Activated CD8-positive, alpha-beta T cell treated with anti-CD3 and anti-CD28 coated beads for 36 hours (primary cell): ENCODE measurements at regions of chr10 and their contacts with region 1.

Region 1: GRCh38 chr10:124719213-124719851 is 24.8 kb downstream of the FAM53B start:
- DNase-seq: peak; percentile 85
- ATAC-seq: peak; percentile 45
- H3K4me3 Mint-ChIP-seq: peak overlapping the region; percentile 52
- H3K27ac Mint-ChIP-seq: peak overlapping the region; percentile 91
- H3K4me1 Mint-ChIP-seq: peaks cover 88% of the 10 kb centered on the region
- H3K27me3 Mint-ChIP-seq: no peaks in the 10 kb centered on the region
- CTCF ChIP-seq: peak; percentile 60

Region 2: GRCh38 chr10:124671486-124672075 is 47.8 kb before region 1 on chr10:
- CTCF ChIA-PET with region 1: interaction called, 18 read pairs
- POLR2A ChIA-PET with region 1: interaction called, 6 read pairs
- intact Hi-C with region 1: no loop called
- DNase-seq: peak; percentile 49
- ATAC-seq: peak; percentile 65
- H3K4me3 Mint-ChIP-seq: no peak overlapping the region
- H3K27ac Mint-ChIP-seq: peak overlapping the region; percentile 59
- H3K4me1 Mint-ChIP-seq: peaks cover 61% of the 10 kb centered on the region
- H3K27me3 Mint-ChIP-seq: no peaks in the 10 kb centered on the region
- CTCF ChIP-seq: peak; percentile 45

Region 3: DNA sequence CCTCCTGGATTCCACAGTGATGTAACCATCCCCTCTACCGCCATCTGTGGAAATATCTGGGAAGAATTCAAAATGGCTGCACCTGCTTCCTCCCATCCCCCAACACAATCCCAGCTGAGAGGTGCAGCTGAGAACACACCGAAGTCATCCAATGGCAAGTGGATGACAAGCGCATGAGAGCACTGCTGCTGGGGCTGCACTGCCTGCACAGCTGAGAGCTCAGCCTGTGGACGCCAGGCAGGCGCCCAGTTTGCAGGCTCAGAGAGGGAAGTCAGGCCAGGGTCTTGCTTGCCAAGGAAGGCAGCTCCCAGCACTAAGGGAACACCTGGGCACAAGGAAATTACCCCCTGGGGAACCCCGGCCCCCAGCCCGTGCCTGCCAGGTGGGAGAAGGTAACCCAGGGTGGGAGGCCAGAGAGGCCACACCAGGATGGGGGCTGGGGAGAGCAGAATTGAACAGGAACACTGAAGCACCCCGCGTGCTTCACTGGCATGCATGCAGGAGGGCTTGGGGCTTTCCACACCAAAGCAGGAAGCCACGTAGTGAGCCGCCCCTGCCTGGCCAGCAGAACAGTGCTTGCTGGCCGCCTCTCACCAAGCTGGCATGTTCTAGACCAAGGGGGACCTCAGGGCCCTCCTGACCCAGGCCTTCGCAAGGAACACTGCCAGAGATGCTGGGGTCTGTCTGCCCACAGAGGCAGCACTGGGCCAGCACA is 21.3 kb before region 1 on chr10:
- CTCF ChIA-PET with region 1: interaction called, 102 read pairs
- POLR2A ChIA-PET with region 1: interaction called, 58 read pairs
- intact Hi-C with region 1: loop called (anchors 2 kb)
- DNase-seq: peak; percentile 76
- ATAC-seq: peak; percentile 50
- H3K4me3 Mint-ChIP-seq: no peak overlapping the region
- H3K27ac Mint-ChIP-seq: peak overlapping the region; percentile 98
- H3K4me1 Mint-ChIP-seq: peaks cover 93% of the 10 kb centered on the region
- H3K27me3 Mint-ChIP-seq: no peaks in the 10 kb centered on the region
- CTCF ChIP-seq: no peak

Region 4: GRCh38 chr10:124708922-124709520 is 10.3 kb before region 1 on chr10:
- CTCF ChIA-PET with region 1: interaction called, 44 read pairs
- POLR2A ChIA-PET with region 1: interaction called, 16 read pairs
- intact Hi-C with region 1: no loop called
- DNase-seq: no peak
- ATAC-seq: no peak
- H3K4me3 Mint-ChIP-seq: no peak overlapping the region
- H3K27ac Mint-ChIP-seq: peak overlapping the region; percentile 21
- H3K4me1 Mint-ChIP-seq: peaks cover 81% of the 10 kb centered on the region
- H3K27me3 Mint-ChIP-seq: no peaks in the 10 kb centered on the region
- CTCF ChIP-seq: no peak